ENCODE measurements at regions of chr9 and their contacts with region 1.

Region 1: GRCh38 chr9:97468658-97469448 is 32.6 kb upstream of the TMOD1 start:
- DNase-seq: peak; percentile 75
- H3K4me3 ChIP-seq: no peak overlapping the region
- H3K27ac ChIP-seq: peak overlapping the region in 1 of 2 experiments; percentile 32; a peak in 1 of 4 replicates
- H3K4me1 ChIP-seq: peaks cover 0 to 2% of the 10 kb centered on the region in 2 experiments; a peak in 2 of 4 replicates
- H3K27me3 ChIP-seq: no peaks in the 10 kb centered on the region
- CTCF ChIP-seq: peak; percentile 79
- EP300 ChIP-seq: no peak
- RAD21 ChIP-seq: peak; percentile 99

Region 2: GRCh38 chr9:97411789-97412625 is 56.8 kb before region 1 on chr9 and contains the start of gene TDRD7:
- CTCF ChIA-PET with region 1: interaction called, 20 read pairs
- POLR2A ChIA-PET with region 1: no interaction called
- DNase-seq: peak; percentile 98
- H3K4me3 ChIP-seq: peak within 1 kb of the TSS; percentile 79 to 94
- H3K27ac ChIP-seq: peak within 1 kb of the TSS in 1 of 2 experiments; percentile 11; a peak in 2 of 4 replicates
- H3K4me1 ChIP-seq: peaks cover 8 to 13% of the 10 kb centered on the region in 2 experiments; a peak in 3 of 4 replicates
- H3K27me3 ChIP-seq: no peaks in the 10 kb centered on the region
- CTCF ChIP-seq: peak; percentile 93
- EP300 ChIP-seq: no peak; a peak in 1 of 4 replicates
- RAD21 ChIP-seq: peak; percentile 65
- polyA plus RNA-seq, gene TDRD7: 4.9 and 5.8 TPM in 2 replicates

Region 3: GRCh38 chr9:97487107-97487506 is 18.3 kb after region 1 on chr9:
- CTCF ChIA-PET with region 1: interaction called, 59 read pairs
- POLR2A ChIA-PET with region 1: no interaction called
- DNase-seq: no peak
- H3K4me3 ChIP-seq: no peak overlapping the region
- H3K27ac ChIP-seq: no peak overlapping the region
- H3K4me1 ChIP-seq: peaks cover 0 to 2% of the 10 kb centered on the region in 2 experiments; a peak in 1 of 4 replicates
- H3K27me3 ChIP-seq: no peaks in the 10 kb centered on the region
- CTCF ChIP-seq: peak; percentile 28; the same call in 1 of the 2 replicates
- EP300 ChIP-seq: no peak
- RAD21 ChIP-seq: no peak

Region 4: DNA sequence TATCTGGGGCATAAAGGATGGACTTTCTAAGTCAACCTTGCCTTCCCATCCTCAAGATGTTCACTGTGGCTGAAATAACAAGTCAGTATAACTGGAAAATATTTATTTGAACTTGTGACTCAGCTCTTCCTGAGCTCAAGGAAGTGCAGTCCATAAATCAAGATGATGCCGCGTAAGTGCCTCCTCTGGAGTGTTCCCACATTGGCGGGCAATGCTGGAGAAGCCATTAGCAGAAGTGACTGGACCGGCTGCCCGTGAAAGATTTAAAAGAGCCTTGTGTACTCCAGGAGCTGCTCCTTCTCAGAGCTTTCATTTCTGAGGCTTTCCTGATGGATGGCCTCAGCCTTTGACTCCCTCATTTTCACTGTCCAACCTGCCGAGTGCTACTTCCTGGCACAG is 50.1 kb after region 1 on chr9:
- CTCF ChIA-PET with region 1: interaction called, 13 read pairs
- POLR2A ChIA-PET with region 1: no interaction called
- DNase-seq: no peak
- H3K4me3 ChIP-seq: no peak overlapping the region
- H3K27ac ChIP-seq: no peak overlapping the region
- H3K4me1 ChIP-seq: peaks cover 0 to 61% of the 10 kb centered on the region in 2 experiments; a peak in 1 of 4 replicates
- H3K27me3 ChIP-seq: no peaks in the 10 kb centered on the region
- CTCF ChIP-seq: no peak
- EP300 ChIP-seq: no peak
- RAD21 ChIP-seq: no peak

Region 5: DNA sequence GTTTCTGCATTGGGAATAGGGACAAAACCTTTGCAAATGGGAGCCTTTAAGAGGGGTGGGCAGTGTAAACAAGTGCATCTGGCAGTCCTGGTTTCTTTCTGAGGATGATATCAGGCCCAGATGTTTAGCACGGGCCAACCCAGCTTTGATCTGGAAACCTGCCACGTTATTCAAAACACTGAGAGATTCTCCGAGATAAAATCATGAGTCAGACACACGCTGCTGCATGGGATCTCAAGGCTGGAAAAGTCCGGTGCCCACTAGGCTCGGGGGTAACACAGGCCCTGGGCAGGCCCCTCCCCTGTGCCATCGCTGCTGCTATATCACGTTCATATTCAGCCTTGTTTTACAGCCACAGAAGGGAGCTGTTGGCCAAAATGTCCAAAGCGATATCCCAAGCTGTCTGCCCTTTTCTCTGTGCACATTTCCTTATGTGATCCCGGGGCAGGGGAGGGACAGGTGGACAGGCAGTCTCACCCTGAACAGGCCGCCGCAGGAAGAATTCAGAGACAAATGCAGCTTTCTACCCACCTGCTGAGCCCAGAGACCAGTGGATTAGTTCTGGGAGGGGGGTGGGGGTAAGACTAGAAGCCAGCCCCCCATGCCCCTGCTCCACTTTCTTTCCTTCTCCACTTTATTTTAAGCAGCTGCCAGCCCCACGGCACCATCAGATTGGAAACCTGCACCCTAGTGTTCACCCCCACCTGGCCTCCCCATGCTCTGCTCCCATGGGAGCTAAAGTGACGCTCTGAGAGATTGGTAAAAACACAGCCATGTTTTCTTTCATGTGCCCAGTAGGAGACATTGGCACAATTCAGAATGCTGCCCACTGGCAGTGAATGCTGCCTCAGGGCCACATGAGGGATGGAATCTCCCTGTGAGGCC is 95.7 kb after region 1 on chr9:
- CTCF ChIA-PET with region 1: interaction called, 65 read pairs
- POLR2A ChIA-PET with region 1: no interaction called
- DNase-seq: peak; percentile 83
- H3K4me3 ChIP-seq: peak overlapping the region; percentile 10 to 16; a peak in 2 of 4 replicates
- H3K27ac ChIP-seq: peak overlapping the region in 1 of 2 experiments; percentile 98; a peak in 2 of 4 replicates
- H3K4me1 ChIP-seq: peaks cover 0 to 84% of the 10 kb centered on the region in 2 experiments; a peak in 2 of 4 replicates
- H3K27me3 ChIP-seq: no peaks in the 10 kb centered on the region
- CTCF ChIP-seq: no peak
- EP300 ChIP-seq: peak; percentile 15 to 97; a peak in 3 of 4 replicates
- RAD21 ChIP-seq: peak; percentile 57

Region 6: DNA sequence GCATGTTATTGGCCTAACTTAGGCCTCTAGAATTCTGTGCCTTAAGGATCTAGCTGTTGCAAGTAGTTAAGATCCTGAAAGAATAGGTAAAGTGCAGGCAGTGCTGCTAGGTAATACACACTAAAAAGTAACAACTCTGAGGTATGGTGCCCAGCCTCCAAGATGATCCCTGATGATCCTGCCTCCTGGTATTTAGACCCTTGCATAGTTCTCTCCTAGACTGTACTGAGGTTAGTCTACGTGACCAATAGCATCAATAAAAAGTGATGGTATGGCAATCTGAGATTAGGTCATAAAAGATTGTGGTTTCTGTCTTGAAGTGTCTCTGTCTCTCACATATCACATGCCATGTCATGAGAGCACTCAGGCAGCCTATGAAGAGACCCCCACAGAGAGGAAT is 155.1 kb after region 1 on chr9:
- CTCF ChIA-PET with region 1: interaction called, 677 read pairs
- POLR2A ChIA-PET with region 1: no interaction called
- DNase-seq: no peak
- H3K4me3 ChIP-seq: no peak overlapping the region
- H3K27ac ChIP-seq: no peak overlapping the region
- H3K4me1 ChIP-seq: no peaks in the 10 kb centered on the region; a peak in 1 of 4 replicates
- H3K27me3 ChIP-seq: no peaks in the 10 kb centered on the region
- CTCF ChIP-seq: no peak
- EP300 ChIP-seq: no peak
- RAD21 ChIP-seq: no peak

Region 7: GRCh38 chr9:97820373-97820772 is 351.5 kb after region 1 on chr9:
- CTCF ChIA-PET with region 1: no interaction called
- POLR2A ChIA-PET with region 1: no interaction called
- DNase-seq: no peak
- H3K4me3 ChIP-seq: no peak overlapping the region
- H3K27ac ChIP-seq: no peak overlapping the region
- H3K4me1 ChIP-seq: no peaks in the 10 kb centered on the region; a peak in 1 of 4 replicates
- H3K27me3 ChIP-seq: no peaks in the 10 kb centered on the region; the same call in 1 of the 2 replicates
- CTCF ChIP-seq: no peak
- EP300 ChIP-seq: no peak
- RAD21 ChIP-seq: no peak